Activated CD4-positive, alpha-beta memory T cell treated with anti-CD3 and anti-CD28 coated beads for 36 hours (primary cell): ENCODE measurements at regions of chr4 and their contacts with region 1.

Region 1: DNA sequence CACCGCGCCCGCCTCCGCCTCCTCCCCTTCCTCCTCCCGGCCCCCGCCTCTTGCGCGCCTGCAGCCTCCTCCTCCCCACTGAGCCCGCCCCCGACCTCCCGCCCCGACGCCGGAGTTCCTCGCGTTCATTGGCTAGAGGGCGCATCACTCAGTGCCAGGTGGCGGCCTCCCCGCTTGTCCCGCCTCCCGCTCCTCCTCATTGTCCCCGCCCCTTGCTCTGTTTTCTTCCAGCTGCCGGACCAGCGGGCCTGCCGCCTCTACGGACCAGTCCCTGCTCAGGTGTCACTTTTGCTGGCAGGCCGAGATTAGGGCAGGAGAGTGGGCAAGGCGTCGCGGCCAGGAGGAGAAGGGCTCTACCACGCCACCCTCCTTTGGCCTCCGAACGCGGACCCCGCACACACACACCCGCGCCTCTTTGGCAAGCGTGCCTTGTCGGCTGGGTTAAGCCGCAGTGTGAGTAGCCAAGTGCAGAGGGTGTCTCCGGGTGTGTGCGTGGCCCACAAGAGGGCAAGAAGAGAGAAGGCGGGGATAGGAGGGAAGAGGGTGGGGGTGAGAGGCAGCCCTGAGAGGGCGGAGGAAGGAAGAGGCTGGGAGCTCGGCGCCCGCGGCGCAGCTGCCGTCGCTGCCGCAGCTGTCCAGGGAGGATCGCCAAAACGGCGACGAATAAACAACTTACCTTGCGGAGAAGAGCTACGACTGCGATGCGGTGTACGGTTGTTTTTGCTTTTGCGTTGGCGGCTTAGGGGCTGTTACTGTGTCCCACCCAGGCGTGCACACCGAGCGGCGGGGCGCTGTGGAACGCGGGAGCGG is 436 bp upstream of the PPP3CA start:
- DNase-seq: peak; percentile 99
- H3K4me3 Mint-ChIP-seq: peak overlapping the region; percentile 95
- H3K27ac Mint-ChIP-seq: peak overlapping the region; percentile 88
- H3K4me1 Mint-ChIP-seq: peaks cover 31% of the 10 kb centered on the region
- H3K27me3 Mint-ChIP-seq: peaks cover 9% of the 10 kb centered on the region

Region 2: DNA sequence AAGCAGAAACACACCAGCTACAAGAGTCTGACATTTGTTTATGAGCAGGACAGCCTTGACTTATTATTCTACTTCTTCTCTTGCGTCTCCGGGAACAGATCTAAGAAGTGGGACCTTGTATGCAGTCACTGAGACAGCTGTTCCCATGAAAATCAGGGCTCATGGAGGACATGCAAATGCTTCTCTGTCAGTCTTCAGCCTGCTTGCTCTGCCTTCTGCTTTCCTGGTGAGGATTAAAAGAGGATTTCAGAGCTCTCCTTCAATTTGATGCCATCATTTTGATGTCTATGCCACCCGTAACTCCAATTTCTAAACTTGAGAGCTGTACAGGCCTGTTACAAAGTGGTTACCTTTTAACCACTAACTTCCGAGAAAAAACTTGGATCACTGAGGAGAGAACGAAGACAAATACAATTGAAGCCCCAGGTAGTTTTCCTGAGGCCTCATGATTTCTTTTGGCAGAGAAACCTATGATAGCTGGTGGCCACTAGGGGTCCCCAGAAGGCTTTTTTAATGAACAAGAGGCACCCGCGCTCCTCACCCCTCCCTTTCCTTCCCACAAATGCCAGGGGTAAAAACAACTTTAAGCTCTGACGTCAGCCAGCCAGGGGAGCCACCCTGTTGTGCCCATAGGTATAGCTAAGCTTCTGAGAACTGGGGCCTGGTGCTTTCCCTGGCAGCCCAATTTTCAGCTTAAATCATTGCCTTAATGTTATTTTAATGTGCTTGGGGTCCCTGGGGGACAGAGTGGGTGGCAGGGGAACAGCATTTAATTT is 1254.5 kb before region 1 on chr4:
- CTCF ChIA-PET with region 1: interaction called, 3 read pairs
- POLR2A ChIA-PET with region 1: no interaction called
- intact Hi-C with region 1: loop called (anchors 5 kb)
- DNase-seq: peak; percentile 93
- H3K4me3 Mint-ChIP-seq: no peak overlapping the region
- H3K27ac Mint-ChIP-seq: peak overlapping the region; percentile 36
- H3K4me1 Mint-ChIP-seq: peaks cover 39% of the 10 kb centered on the region
- H3K27me3 Mint-ChIP-seq: no peaks in the 10 kb centered on the region

Region 3: GRCh38 chr4:101037938-101038413 is 309.8 kb before region 1 on chr4:
- CTCF ChIA-PET with region 1: no interaction called
- POLR2A ChIA-PET with region 1: no interaction called
- intact Hi-C with region 1: loop called (anchors 1 kb)
- DNase-seq: peak; percentile 44
- H3K4me3 Mint-ChIP-seq: no peak overlapping the region
- H3K27ac Mint-ChIP-seq: peak overlapping the region; percentile 52
- H3K4me1 Mint-ChIP-seq: peaks cover 27% of the 10 kb centered on the region
- H3K27me3 Mint-ChIP-seq: no peaks in the 10 kb centered on the region

Region 4: DNA sequence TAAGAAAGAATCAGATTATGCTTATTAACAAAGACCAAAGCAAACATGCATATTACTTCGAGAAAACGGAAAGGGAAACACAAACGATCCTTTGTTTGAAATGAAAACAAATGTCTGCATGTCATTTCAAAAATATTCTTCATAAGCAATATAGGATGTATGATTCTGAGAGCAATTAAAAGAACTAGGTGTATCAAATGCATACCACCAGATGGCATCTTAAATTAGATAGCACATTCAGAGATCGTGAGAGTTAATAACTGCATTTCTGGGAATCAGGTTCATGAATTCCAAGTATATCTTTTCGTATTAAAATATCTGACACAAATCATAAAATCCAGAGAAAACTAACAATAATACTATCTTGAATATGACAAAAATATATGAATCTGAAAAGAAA is 159.9 kb before region 1 on chr4:
- CTCF ChIA-PET with region 1: interaction called, 10 read pairs
- POLR2A ChIA-PET with region 1: no interaction called
- intact Hi-C with region 1: loop called (anchors 5 kb)
- DNase-seq: no peak
- H3K4me3 Mint-ChIP-seq: no peak overlapping the region
- H3K27ac Mint-ChIP-seq: no peak overlapping the region
- H3K4me1 Mint-ChIP-seq: peaks cover 20% of the 10 kb centered on the region
- H3K27me3 Mint-ChIP-seq: no peaks in the 10 kb centered on the region

Region 5: DNA sequence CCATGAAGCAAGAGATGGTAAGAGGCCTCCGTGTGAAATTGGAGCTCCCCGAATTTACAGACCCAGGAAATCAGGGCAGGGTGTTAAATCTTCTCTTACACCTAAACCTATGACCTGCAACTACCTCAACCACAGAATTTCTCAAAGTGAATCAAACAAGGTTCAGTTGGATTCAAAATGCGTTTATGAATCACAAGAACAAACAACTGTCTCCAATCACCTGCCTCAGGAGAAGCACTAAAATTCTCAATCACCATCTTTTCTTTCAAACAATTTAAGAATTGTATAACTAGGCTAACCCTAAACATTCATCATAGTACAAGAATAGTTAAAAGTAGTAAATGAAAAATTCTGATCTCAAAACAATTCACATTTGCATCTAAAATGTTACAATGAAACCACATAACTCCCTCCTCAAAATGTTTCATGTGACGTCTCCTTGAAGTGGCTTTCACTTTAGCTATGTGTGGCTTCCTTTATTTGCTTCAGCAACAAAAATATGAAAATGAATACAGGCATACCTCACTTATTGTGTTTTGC is 19.6 kb before region 1 on chr4:
- CTCF ChIA-PET with region 1: interaction called, 4 read pairs
- POLR2A ChIA-PET with region 1: interaction called, 6 read pairs
- intact Hi-C with region 1: loop called (anchors 1 kb)
- DNase-seq: peak; percentile 37
- H3K4me3 Mint-ChIP-seq: peak overlapping the region; percentile 63
- H3K27ac Mint-ChIP-seq: peak overlapping the region; percentile 65
- H3K4me1 Mint-ChIP-seq: peaks cover 48% of the 10 kb centered on the region
- H3K27me3 Mint-ChIP-seq: peaks cover 2% of the 10 kb centered on the region

Region 6: DNA sequence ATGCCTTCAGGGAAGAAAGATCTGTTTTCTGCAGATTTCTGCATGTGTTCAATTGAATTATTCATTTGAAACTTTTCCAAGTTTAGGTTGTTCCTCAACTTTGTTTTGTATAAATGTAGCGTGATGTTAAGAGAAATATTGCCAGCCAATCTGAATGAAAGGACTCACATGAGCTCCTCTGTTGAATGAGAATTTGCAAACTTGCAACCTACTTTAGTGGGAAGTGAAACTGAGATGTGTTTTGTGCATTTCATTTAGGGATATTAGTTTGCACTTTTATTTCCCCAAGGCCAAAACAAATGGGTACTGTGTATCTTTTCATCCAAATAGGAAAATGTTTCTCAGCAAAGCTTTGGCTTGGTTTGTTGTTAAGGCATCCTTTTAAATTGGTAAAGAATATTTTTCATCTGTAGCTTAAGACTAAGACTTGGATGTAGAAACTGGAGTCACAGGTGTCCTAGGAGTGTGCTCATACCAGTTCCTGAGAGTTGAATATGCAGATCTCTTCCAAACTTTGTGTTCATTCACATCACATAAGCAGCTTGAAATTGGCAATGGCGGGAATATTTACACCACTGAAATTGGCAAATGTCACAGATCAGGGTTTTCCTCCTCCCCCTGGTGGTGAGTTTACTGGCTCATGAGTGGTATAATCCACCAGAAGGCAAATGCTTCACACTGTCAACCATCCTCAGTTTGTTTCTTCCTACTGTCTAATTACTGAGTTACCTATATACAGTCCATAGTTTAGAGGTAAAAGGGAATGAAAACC is 249.2 kb after region 1 on chr4:
- CTCF ChIA-PET with region 1: interaction called, 4 read pairs
- POLR2A ChIA-PET with region 1: no interaction called
- intact Hi-C with region 1: loop called (anchors 5 kb)
- DNase-seq: peak; percentile 18
- H3K4me3 Mint-ChIP-seq: no peak overlapping the region
- H3K27ac Mint-ChIP-seq: no peak overlapping the region
- H3K4me1 Mint-ChIP-seq: no peaks in the 10 kb centered on the region
- H3K27me3 Mint-ChIP-seq: peaks cover 3% of the 10 kb centered on the region

Region 7: DNA sequence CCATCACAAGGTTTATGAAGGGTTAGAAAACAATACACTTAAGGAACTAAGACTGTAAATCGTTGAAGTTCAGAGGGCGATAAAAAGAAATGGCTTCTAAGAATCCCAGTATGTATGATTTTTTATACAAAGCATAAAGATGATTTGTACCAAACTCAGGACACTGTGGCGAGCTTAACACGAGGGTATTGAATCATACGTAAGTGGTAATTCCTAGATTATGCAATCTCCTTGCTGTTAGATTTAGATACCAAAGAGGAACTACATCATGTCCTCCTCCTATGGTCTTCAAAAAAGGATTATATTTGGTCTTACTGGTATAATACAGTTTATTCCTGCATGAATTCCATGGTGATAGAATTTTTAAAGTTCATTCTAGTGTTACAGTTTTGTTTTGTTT is 1177.3 kb after region 1 on chr4:
- CTCF ChIA-PET with region 1: no interaction called
- POLR2A ChIA-PET with region 1: no interaction called
- intact Hi-C with region 1: loop called (anchors 10 kb)
- DNase-seq: no peak
- H3K4me3 Mint-ChIP-seq: no peak overlapping the region
- H3K27ac Mint-ChIP-seq: peak overlapping the region; percentile 73
- H3K4me1 Mint-ChIP-seq: peaks cover 88% of the 10 kb centered on the region
- H3K27me3 Mint-ChIP-seq: no peaks in the 10 kb centered on the region